IMR-90 (cell line): ENCODE measurements at regions of chr14 and their contacts with region 1.

Region 1: DNA sequence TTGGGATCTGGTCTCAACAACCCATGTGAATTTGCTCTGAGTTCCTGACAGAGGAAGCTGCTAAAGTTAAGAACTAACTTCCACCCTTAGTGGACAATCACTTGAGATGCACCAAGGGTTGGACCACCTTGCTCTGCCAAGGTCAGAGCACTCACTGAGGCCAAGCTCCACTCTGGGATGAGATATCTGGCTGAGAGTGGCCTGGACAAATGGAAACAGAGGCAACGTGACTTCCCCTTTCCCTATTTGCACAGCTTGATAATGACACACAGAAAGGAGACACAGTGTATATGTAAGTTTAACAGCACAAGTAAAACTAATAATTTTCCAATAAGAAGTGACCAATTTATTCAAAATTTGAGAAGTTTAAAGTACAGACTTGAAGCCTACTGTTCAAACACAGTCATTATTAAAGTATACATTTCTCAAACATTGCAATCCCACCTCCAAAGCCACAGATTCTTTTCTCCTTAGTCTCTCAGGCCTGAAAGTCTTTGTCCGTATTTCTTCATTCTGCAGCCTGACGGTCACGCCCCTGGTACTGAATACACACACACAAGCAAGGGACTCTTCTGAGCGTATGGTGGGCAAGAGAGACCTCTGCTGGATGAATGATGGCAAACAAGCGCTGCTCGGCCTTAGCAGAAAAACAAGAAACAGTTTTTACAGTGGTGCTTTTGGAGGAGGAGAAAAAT is 28.6 kb downstream of the TMEM30B start:
- DNase-seq: peak; percentile 99
- ATAC-seq: peak; percentile 91
- H3K4me3 ChIP-seq: no peak overlapping the region
- H3K27ac ChIP-seq: peak overlapping the region; percentile 97
- H3K4me1 ChIP-seq: peaks cover 14% of the 10 kb centered on the region
- H3K27me3 ChIP-seq: no peaks in the 10 kb centered on the region
- CTCF ChIP-seq: peak; percentile 98
- POLR2A ChIP-seq: peak; percentile 78
- RAD21 ChIP-seq: peak; percentile 100

Region 2: DNA sequence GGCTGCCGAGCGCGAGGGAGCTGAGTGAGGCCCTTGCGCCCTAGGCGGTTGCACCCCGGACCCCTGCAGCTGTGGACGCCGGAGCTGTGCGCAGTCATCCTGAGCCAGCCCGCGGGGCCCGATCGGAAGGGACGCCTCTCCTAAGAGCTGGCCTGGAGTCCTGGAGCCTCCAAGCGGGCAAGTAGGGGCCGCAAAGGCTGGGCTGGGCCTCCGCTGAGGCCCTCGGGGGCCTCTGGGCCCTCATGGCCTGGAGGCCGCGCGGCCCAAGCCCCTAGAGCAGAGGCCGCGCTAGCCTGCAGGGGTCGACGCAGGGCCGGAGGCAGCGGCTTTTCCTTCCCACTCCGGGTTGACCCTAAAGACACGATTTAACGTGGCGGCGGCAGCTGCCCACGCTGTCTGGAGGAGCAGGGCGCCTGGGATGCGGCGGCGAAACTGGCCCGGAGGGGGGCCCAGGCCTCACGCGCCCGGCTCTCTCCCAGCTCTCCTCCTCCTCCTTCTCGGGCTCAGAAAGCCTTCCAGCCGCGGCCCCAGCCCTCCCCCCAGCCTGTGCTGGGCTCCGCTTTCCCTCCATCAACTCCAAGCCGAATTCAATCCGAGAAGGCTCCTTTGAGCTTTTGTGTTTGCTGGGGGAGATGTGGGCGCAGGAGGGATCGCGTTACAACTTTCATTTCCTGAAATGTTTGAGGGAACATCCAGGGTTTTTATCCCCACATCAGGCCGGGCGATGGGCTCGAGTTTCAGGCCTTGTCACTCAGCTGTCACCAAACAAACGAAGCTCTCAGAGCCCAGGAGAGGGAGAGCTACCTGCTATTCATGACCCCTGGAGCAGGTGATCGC is 614.8 kb before region 1 on chr14:
- CTCF ChIA-PET with region 1: no interaction called
- POLR2A ChIA-PET with region 1: no interaction called
- dilution Hi-C with region 1: no loop called
- in situ Hi-C with region 1: loop called (anchors 5 kb)
- intact Hi-C with region 1: no loop called
- DNase-seq: peak; percentile 53
- ATAC-seq: peak; percentile 76
- H3K4me3 ChIP-seq: peak overlapping the region; percentile 6; the same call in 1 of the 2 replicates
- H3K27ac ChIP-seq: peak overlapping the region; percentile 58
- H3K4me1 ChIP-seq: peaks cover 16% of the 10 kb centered on the region
- H3K27me3 ChIP-seq: no peaks in the 10 kb centered on the region
- CTCF ChIP-seq: 0 out of 2 replicates have a peak, but pooled peaks have one; percentile 9
- POLR2A ChIP-seq: no peak
- RAD21 ChIP-seq: 0 out of 2 replicates have a peak, but pooled peaks have one; percentile 6

Region 3: DNA sequence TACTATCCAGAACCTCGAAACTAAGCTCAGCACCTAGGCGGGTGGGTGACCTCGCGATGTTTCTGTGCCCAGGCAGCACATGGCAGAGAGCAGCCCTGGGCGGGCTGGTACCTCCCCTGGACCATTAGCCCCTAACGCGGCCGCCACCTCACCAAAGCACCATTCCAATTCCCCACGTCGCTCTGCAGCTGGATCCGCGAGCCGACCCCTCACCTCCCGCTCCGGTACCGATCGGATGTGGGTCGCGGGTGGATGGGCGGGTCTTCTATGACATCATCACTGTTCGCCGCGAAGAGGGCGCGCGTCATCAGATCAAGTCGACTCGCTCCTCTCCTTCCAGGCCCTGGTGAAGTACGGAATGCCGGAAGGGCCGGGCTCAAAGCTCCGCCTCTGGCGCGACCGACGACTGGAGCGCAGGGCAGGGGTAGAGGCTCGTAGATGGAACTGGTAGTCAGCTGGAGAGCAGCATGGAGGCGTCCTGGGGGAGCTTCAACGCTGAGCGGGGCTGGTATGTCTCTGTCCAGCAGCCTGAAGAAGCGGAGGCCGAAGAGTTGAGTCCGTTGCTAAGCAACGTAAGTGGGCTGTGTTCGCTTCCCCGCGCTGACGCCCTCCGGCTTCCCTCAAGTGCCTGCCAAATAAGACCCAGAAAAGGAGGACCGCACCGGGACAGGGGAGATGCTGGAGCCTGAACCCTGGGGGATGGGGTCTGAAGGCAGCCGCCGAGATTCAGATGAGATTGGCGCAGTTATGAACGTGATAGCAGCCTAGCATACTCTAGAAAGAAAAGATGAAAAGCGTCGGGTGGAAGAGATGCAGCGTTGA is 271.5 kb before region 1 on chr14 and contains the starts of genes SLC38A6 and TRMT5:
- CTCF ChIA-PET with region 1: no interaction called
- POLR2A ChIA-PET with region 1: no interaction called
- dilution Hi-C with region 1: no loop called
- in situ Hi-C with region 1: loop called (anchors 5 kb)
- intact Hi-C with region 1: loop called (anchors 1 kb)
- DNase-seq: peak; percentile 97
- ATAC-seq: peak; percentile 95
- H3K4me3 ChIP-seq: peak within 1 kb of the TSS; percentile 83
- H3K27ac ChIP-seq: peak within 1 kb of the TSS; percentile 89
- H3K4me1 ChIP-seq: no peaks in the 10 kb centered on the region; the same call in 1 of the 2 replicates
- H3K27me3 ChIP-seq: no peaks in the 10 kb centered on the region
- CTCF ChIP-seq: no peak
- POLR2A ChIP-seq: peak; percentile 83
- RAD21 ChIP-seq: peak; percentile 28
- total RNA-seq, gene SLC38A6: 18.3 and 38.9 TPM in 2 replicates
- total RNA-seq, gene TRMT5: 10.4 and 15.6 TPM in 2 replicates

Region 4: DNA sequence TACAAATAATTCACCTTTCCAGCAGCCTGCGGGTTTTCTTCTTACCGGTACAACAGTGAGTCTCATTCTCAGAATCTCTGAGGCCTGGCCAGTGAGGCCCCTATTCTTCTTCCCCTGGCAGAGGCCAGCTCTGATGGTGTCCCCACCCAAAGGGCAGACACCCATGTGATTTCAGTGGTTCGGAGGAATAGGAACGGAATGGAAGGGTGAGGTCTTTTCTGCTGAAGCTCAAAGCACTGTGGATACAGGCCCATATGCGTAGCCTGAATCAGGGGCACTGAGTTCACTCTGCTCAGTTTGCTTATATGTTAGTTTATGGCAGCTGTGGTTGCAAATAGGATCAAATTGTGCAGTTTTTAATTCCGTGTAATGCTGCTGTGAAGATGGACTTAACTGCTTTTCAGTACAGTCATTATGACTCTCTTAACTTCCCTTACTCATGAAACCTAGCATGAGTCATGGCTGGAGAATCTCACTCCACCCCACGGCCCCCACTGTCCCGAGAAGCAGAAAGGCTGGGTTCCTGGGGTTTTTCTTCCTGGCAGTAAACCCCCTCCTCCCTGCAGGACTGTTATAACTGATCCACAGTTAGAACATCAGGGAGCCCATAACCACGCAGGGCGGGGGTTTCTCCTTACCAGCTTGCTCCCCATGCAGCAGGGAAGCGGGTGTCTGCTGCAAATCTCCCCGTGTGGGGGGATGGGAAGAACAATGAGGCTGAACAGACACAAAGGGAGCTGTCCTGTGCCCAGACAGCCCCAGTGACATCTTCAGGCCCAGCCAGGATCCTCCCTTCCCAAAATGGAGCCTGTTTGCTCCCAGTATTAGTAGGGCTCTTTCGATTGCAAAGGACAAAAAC is 148.8 kb before region 1 on chr14:
- CTCF ChIA-PET with region 1: no interaction called
- POLR2A ChIA-PET with region 1: no interaction called
- dilution Hi-C with region 1: no loop called
- in situ Hi-C with region 1: no loop called
- intact Hi-C with region 1: loop called (anchors 2 kb)
- DNase-seq: peak; percentile 99
- ATAC-seq: peak; percentile 88
- H3K4me3 ChIP-seq: no peak overlapping the region
- H3K27ac ChIP-seq: peak overlapping the region; percentile 95
- H3K4me1 ChIP-seq: peaks cover 42% of the 10 kb centered on the region
- H3K27me3 ChIP-seq: no peaks in the 10 kb centered on the region
- CTCF ChIP-seq: no peak
- POLR2A ChIP-seq: no peak
- RAD21 ChIP-seq: no peak

Region 5: DNA sequence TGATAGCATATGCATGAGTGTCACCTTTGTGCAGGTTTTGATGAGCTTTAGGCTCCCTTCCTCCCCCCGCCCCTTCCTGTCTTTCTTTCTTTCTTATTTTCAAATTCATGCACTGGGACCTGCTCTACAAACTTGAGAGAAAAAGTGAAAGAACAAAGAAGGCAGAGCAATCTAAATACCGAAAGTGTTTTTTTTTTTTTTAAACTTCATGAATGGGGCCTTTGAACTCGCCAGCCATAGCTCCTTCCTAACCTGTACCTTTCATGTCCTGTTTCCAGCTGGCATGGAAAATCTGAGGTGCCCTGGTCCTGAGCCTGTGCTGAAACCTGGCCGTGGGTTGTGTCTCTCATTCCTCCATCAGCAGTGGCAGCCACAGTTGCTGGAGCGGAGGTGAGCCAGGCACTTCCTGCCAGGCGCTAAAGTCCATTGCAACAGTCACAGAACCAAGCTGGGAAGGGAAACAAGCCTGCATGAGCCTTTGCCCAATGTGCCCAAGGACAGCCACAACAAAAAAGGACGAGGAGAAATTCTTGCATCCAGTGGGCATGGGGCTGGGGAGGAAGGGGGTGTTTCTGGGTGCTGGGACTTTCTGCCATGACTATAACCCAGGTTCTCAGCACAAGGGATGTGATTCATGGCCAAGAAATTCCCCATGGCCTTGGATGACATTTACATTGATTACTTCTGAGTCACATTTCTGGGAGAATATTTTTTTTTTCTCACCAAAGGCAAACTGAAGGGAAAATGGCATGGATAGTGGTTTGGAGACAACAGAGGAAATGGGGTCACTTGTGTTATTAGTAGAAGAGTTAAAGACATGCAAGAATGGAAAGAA is 74.1 kb before region 1 on chr14:
- CTCF ChIA-PET with region 1: no interaction called
- POLR2A ChIA-PET with region 1: no interaction called
- dilution Hi-C with region 1: no loop called
- in situ Hi-C with region 1: no loop called
- intact Hi-C with region 1: loop called (anchors 1 kb)
- DNase-seq: peak; percentile 99
- ATAC-seq: peak; percentile 83
- H3K4me3 ChIP-seq: no peak overlapping the region
- H3K27ac ChIP-seq: peak overlapping the region; percentile 100
- H3K4me1 ChIP-seq: peaks cover 33% of the 10 kb centered on the region
- H3K27me3 ChIP-seq: no peaks in the 10 kb centered on the region
- CTCF ChIP-seq: no peak
- POLR2A ChIP-seq: no peak
- RAD21 ChIP-seq: no peak; the same call in 1 of the 2 replicates